B cell (primary cell): ENCODE measurements at regions of chr2 and their contacts with region 1.

Region 1: GRCh38 chr2:199739413-199740110 is 111.4 kb downstream of the FTCDNL1 start:
- DNase-seq: peak; percentile 54
- ATAC-seq: no peak
- H3K4me3 ChIP-seq: no peak overlapping the region
- H3K4me3 Mint-ChIP-seq: no peak overlapping the region
- H3K27ac ChIP-seq: no peak overlapping the region
- H3K27ac Mint-ChIP-seq: no peak overlapping the region
- H3K4me1 ChIP-seq: no peaks in the 10 kb centered on the region
- H3K4me1 Mint-ChIP-seq: peaks cover 4% of the 10 kb centered on the region
- H3K27me3 ChIP-seq: peaks cover 0 to 8% (median 3%) of the 10 kb centered on the region in 4 experiments
- H3K27me3 Mint-ChIP-seq: peaks cover 34% of the 10 kb centered on the region
- CTCF ChIP-seq: peak; percentile 94

Region 2: DNA sequence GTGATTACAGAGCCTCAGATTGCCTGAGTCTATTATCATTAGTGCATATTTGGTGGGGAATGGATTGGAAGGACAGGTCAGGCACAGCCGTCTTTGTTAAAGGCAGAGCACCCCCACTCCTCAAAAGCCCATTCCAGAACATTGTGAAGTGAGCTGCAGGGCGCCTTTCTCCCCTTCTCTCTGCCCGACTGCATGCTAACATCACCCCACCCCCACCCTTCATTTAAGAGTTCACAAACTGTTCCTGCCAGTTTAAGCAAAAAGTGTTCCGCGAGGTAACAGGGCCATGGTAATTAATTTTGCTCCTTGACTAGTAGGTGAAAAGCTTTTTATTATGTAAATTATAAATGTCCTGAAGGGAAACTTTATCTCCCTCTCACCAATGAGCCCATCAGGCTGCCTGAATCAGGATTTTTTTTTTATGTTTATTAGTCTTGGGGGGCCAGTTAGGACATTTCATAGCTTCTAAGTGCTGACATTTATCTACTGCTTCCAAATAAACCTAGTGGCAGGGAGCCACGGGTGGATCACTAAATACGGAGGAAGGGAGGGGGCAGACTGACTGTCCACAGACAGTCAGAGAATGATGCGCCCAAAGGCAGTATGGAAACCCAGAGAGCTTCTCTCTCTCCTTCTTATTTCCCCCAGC is 12.0 kb after region 1 on chr2:
- CTCF ChIA-PET with region 1: interaction called, 14 read pairs
- POLR2A ChIA-PET with region 1: no interaction called
- intact Hi-C with region 1: no loop called
- DNase-seq: no peak
- ATAC-seq: no peak
- H3K4me3 ChIP-seq: no peak overlapping the region
- H3K4me3 Mint-ChIP-seq: no peak overlapping the region
- H3K27ac ChIP-seq: no peak overlapping the region
- H3K27ac Mint-ChIP-seq: no peak overlapping the region
- H3K4me1 ChIP-seq: no peaks in the 10 kb centered on the region
- H3K4me1 Mint-ChIP-seq: no peaks in the 10 kb centered on the region
- H3K27me3 ChIP-seq: no peaks in the 10 kb centered on the region
- H3K27me3 Mint-ChIP-seq: peaks cover 12% of the 10 kb centered on the region
- CTCF ChIP-seq: no peak